ENCODE measurements at regions of chr17 and their contacts with region 1.

Region 1: GRCh38 chr17:47970704-47971463 is at the start of gene CDK5RAP3:
- DNase-seq: peak; percentile 100
- ATAC-seq: peak; percentile 98
- H3K4me3 Mint-ChIP-seq: peak within 1 kb of the TSS; percentile 82
- H3K27ac Mint-ChIP-seq: peak within 1 kb of the TSS; percentile 94
- H3K4me1 Mint-ChIP-seq: peaks cover 14% of the 10 kb centered on the region
- H3K27me3 Mint-ChIP-seq: peaks cover 16% of the 10 kb centered on the region
- CTCF ChIP-seq: peak; percentile 74
- total RNA-seq, gene CDK5RAP3: 128 to 143 TPM (median 138 TPM) in 3 replicates

Region 2: DNA sequence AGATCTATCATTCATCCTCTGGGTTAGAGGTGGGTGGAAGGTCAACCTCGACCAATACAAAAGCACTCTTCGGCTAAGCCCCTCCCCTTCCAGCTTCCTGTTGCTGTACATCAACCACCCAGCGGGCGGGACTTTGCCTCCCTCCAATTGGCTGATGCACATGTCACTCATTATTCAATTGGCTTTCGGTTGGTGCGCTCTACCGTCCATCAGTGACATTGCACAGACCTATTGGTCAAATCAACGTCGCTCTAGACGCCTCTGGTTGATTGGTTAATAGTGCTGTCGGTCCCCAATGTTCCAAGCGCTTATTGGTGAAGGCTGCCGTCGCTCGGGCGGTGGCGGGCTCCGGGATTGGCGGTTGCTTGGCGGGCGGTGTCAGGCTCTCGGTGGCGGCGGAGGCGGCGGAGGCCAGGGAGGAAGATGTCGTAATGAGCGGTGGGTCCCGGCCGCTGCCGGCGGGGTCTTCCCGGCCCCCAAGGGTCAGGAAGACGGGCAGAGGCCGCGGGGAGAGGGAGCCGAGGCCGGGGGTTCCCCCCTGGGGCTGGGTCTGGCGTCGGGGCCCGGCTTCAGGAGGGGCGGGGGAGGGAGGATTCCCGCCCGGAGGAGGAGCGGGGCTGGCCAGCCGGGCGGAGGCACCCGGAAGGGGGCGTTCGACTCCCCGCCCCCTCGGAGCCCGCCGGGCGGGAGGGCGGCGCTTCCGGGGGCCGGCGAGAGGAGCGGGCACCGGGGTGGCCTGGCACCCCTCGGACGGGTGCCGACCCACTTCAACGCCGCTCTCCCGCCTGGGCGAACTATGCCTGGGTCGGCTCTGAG is 74.8 kb before region 1 on chr17 and contains the start of gene SP2:
- CTCF ChIA-PET with region 1: interaction called, 18 read pairs
- POLR2A ChIA-PET with region 1: interaction called, 7 read pairs
- DNase-seq: peak; percentile 99
- ATAC-seq: peak; percentile 95
- H3K4me3 Mint-ChIP-seq: peak within 1 kb of the TSS; percentile 97
- H3K27ac Mint-ChIP-seq: peak within 1 kb of the TSS; percentile 96
- H3K4me1 Mint-ChIP-seq: peaks cover 37% of the 10 kb centered on the region
- H3K27me3 Mint-ChIP-seq: no peaks in the 10 kb centered on the region
- CTCF ChIP-seq: no peak
- total RNA-seq, gene SP2: 9.9 to 11.5 TPM (median 10.7 TPM) in 3 replicates

Region 3: DNA sequence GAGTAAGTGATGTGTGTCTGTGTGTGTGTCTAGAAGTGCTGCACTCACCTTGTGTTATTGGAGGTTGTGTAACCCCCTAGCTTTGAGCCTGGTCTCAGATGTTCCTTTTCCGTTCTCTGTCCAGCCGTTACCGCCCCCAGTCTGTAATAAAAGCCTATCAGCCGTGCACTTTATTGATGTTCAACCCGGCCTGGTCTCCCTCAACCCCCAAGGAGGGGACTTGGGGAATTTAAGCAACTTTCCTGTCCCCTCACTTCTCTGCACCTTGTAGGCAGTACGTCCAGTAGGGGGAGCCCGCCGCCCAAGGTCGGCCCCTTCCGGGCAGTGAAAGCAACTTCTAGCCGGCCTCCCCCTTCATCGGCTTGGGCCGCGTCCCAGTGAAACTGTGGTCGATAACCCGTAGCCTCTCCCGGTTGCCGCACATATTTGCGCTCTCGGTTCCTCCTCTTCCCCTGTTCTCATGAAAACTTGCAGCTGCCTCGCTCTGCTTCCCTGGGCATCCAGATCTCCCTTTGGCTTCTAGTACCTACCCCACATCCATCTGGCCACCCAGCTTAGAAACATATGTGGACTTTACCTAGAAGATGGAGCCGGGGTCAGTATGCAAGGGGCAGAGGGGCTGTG is 21.6 kb before region 1 on chr17:
- CTCF ChIA-PET with region 1: interaction called, 119 read pairs
- POLR2A ChIA-PET with region 1: no interaction called
- DNase-seq: peak; percentile 98
- ATAC-seq: peak; percentile 88
- H3K4me3 Mint-ChIP-seq: peak overlapping the region; percentile 47
- H3K27ac Mint-ChIP-seq: peak overlapping the region; percentile 83
- H3K4me1 Mint-ChIP-seq: peaks cover 16% of the 10 kb centered on the region
- H3K27me3 Mint-ChIP-seq: no peaks in the 10 kb centered on the region
- CTCF ChIP-seq: peak; percentile 72

Region 4: GRCh38 chr17:47987240-47987835 is 16.5 kb after region 1 on chr17:
- CTCF ChIA-PET with region 1: interaction called, 11 read pairs
- POLR2A ChIA-PET with region 1: no interaction called
- DNase-seq: peak; percentile 40
- ATAC-seq: peak; percentile 38
- H3K4me3 Mint-ChIP-seq: no peak overlapping the region
- H3K27ac Mint-ChIP-seq: no peak overlapping the region
- H3K4me1 Mint-ChIP-seq: peaks cover 42% of the 10 kb centered on the region
- H3K27me3 Mint-ChIP-seq: no peaks in the 10 kb centered on the region
- CTCF ChIP-seq: no peak

Region 5: DNA sequence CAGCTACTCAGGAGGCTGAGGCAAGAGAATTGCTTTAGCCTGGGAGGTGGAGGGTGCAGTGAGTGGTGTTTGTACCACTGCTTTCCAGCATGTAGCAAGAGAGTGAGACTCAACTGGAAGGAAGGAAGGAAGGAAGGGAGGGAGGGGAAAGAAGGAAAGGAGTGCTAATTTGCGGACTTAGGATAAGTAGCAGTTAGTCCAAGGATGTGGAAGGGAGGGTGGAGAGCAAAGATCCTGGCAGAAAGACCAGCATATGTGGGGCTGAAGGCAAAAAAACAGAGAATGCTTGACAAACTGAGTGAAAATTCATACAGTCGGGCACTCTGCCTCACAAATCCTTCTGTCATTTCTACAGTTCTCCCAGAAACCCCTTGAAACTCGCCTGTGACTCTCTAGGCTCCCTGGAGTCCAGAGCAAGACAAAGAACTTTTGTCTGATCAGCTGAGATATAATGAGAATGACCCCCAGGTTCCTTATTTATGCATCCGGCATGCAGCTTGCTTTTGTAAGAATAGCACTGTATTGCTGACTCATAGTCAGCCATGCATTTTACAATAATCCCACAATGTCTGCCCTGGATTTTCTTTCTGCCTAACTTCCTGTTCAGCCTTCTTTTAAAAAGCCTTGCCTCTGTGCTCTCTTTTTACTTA is 31.5 kb after region 1 on chr17:
- CTCF ChIA-PET with region 1: interaction called, 20 read pairs
- POLR2A ChIA-PET with region 1: interaction called, 3 read pairs
- DNase-seq: no peak
- ATAC-seq: no peak
- H3K4me3 Mint-ChIP-seq: peak overlapping the region; percentile 21
- H3K27ac Mint-ChIP-seq: peak overlapping the region; percentile 75
- H3K4me1 Mint-ChIP-seq: peaks cover 52% of the 10 kb centered on the region
- H3K27me3 Mint-ChIP-seq: no peaks in the 10 kb centered on the region; the same call in 1 of the 2 replicates
- CTCF ChIP-seq: no peak

Region 6: DNA sequence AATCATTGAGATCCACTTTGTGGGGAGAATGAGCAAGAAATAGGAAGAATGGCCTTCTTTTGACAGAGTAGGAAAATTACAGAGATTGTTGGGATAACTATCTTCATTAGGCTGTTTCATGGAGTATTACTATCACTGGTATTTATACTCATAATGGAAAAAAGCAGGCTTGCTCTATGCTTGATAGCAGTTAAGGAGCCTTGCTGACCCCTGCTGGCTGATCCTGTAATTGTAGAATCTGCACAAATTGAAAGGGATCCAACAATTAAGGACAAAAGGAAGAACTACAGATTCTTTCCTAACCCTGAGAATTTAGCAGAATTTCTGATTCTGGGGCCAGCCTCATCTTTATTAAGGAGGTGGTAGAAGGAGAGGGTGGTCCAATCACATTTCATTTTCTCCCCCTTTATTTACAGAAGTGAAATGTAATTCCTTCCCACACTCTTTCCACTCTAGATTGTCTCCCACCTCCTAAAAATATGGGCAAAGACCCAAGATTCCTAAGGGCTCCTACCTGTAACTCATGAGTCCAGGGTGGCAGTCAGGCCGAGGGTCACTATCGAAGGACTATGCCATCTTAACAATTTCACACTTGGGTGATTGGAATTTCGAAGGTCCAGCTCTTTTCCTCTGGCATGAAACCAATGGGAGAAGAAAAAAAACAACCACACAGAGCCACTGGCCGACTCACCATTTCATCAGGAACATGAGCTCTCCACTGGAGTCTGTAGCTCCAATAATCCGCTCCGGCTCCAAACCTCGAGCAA is 103.6 kb after region 1 on chr17:
- CTCF ChIA-PET with region 1: no interaction called
- POLR2A ChIA-PET with region 1: no interaction called
- DNase-seq: peak; percentile 80
- ATAC-seq: peak; percentile 67
- H3K4me3 Mint-ChIP-seq: no peak overlapping the region
- H3K27ac Mint-ChIP-seq: peak overlapping the region; percentile 55
- H3K4me1 Mint-ChIP-seq: no peaks in the 10 kb centered on the region
- H3K27me3 Mint-ChIP-seq: no peaks in the 10 kb centered on the region
- CTCF ChIP-seq: peak; percentile 35; the same call in 1 of the 2 replicates